BJ (cell line): ENCODE measurements at regions of chr16 and their contacts with region 1.

Region 1: DNA sequence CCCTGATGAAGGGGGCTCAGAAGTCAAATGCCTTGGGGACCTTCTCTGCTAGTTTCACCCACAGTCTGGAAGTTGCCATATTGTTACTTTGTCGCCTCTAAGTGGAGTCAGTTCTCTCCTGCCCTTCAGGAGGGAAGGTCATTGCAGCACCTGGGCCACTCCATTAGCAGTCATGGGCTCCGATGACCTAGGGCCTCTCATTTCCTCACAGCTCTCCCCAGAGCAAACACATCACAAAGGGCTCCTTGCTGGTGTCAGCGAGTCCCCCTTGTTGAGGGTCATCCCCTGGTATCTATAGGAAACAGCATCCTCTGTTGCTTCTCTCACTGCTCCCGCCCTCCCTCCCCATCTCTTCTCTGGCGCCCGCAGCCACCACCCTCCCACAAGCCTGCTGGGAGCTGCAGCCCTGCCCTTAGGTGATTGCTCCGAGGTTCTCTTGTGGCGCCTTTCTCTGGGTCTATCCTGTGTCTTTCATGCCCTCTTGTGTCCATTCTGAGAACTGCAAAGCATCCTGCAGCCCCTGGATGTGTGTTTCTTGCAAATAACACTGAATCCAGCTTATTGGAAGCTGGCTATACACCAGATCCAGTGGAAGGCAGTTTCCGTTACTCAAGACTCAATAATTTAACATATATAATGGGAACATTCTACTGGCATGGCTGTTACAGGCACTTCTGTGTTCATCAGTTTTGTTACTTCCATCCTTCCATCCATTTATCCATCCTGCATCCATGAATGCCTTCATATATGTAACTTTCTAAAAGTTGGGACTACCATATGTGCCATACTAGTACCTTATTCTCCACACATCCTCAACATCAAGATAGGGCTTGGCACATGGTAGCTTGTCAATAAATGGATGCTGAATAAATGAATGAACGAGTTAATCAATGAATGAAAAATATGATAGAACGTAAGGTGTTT is 21.2 kb downstream of the PDILT start:
- DNase-seq: no peak
- H3K4me3 ChIP-seq: no peak overlapping the region
- H3K27me3 ChIP-seq: no peaks in the 10 kb centered on the region
- CTCF ChIP-seq: peak; percentile 81

Region 2: GRCh38 chr16:19907161-19907992 is 476.0 kb before region 1 on chr16:
- CTCF ChIA-PET with region 1: interaction called, 154 read pairs
- POLR2A ChIA-PET with region 1: no interaction called
- DNase-seq: no peak
- H3K4me3 ChIP-seq: no peak overlapping the region
- H3K27me3 ChIP-seq: peaks cover 2% of the 10 kb centered on the region; the same call in 1 of the 2 replicates
- CTCF ChIP-seq: peak; percentile 97

Region 3: GRCh38 chr16:19912455-19913339 is 470.7 kb before region 1 on chr16:
- CTCF ChIA-PET with region 1: interaction called, 154 read pairs
- POLR2A ChIA-PET with region 1: no interaction called
- DNase-seq: no peak
- H3K4me3 ChIP-seq: no peak overlapping the region
- H3K27me3 ChIP-seq: peaks cover under 1% of the 10 kb centered on the region; the same call in 1 of the 2 replicates
- CTCF ChIP-seq: no peak

Region 4: GRCh38 chr16:20393801-20394577 is 10.6 kb after region 1 on chr16:
- CTCF ChIA-PET with region 1: interaction called, 18 read pairs
- POLR2A ChIA-PET with region 1: no interaction called
- DNase-seq: no peak
- H3K4me3 ChIP-seq: no peak overlapping the region
- H3K27me3 ChIP-seq: no peaks in the 10 kb centered on the region
- CTCF ChIP-seq: no peak